Panc1 (cell line): ENCODE measurements at regions of chr1 and their contacts with region 1.

Region 1: GRCh38 chr1:15283526-15283925 is 36.5 kb downstream of the FHAD1 start:
- DNase-seq: no peak
- ATAC-seq: peak; percentile 71
- H3K4me3 ChIP-seq: no peak overlapping the region
- H3K27ac ChIP-seq: no peak overlapping the region
- H3K4me1 ChIP-seq: no peaks in the 10 kb centered on the region
- H3K27me3 ChIP-seq: no peaks in the 10 kb centered on the region; the same call in 1 of the 2 replicates
- CTCF ChIP-seq: no peak

Region 2: DNA sequence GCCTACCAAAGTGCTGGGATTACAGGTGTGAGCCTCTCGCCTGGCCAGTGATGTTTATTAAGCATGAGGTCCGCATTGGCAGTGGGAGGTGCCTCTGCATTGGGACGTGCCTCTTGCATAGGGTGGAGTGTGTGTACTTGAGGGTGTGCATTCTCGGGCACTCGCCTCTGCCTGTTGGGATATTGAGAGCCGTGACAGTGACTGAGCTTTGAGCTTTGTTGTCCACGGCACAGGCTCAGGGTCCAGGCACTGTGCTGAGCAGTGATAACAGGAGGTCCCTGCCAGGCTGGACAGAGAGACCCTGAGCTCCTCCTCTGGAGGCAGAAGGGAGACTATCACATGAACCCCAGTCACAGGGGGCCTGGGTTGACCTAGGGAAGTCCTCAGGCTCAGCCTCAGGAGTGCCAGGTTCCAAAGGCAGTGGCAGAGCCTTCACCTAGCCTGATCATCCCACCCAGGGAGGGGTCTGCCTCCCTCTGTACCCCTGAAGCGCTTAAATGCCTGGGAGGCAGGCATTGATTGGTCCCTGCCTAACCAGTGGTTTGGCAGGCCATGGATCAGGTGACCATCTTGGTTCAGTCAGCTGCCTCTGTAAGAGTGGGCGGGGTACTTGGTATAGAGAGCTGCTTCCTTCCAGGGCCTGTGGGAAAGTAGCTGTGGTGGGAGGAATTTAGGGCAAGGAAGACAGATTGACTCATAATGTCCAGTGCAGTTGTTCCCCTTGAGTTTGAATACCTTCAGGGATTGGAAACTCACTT is 343.8 kb before region 1 on chr1:
- CTCF ChIA-PET with region 1: no interaction called
- POLR2A ChIA-PET with region 1: no interaction called
- in situ Hi-C with region 1: no loop called
- intact Hi-C with region 1: no loop called
- DNase-seq: no peak
- ATAC-seq: 0 out of 2 replicates have a peak, but pooled peaks have one; percentile 17
- H3K4me3 ChIP-seq: no peak overlapping the region
- H3K27ac ChIP-seq: no peak overlapping the region
- H3K4me1 ChIP-seq: 0 out of 2 replicates have a peak, but pooled peaks cover 8% of the 10 kb centered on the region
- H3K27me3 ChIP-seq: no peaks in the 10 kb centered on the region
- CTCF ChIP-seq: no peak

Region 3: DNA sequence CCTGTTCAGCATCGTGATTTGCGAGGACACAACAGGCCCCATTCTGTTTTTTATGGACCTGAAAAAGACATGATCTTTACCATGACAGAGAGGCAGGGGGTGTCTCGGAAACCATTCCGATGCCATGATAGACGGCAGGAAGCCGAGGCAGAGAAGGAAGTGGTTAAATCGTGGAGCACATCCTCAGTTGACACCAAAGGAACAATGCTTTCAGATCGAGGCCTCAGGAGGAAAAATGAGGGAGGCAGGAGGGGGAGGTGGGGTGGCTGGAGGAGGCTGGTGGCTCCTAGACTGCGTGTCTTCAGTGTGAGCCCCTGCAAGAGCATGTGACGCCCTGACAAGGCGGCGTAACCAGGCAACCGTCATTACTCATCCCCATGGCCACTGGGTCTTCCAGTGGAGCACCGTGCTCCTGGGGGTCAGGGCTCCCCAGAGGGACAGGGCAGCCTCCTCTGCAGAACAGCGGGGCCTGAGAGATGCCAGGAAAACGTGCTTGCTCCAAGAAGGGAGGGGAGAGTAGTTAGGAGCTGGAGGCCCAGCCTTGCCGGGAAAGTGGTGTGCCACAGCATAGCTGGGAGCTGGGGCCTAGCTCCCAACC is 302.8 kb before region 1 on chr1:
- CTCF ChIA-PET with region 1: no interaction called
- POLR2A ChIA-PET with region 1: no interaction called
- in situ Hi-C with region 1: no loop called
- intact Hi-C with region 1: no loop called
- DNase-seq: no peak
- ATAC-seq: no peak
- H3K4me3 ChIP-seq: no peak overlapping the region
- H3K27ac ChIP-seq: no peak overlapping the region
- H3K4me1 ChIP-seq: peaks cover 3% of the 10 kb centered on the region; the same call in 1 of the 2 replicates
- H3K27me3 ChIP-seq: no peaks in the 10 kb centered on the region
- CTCF ChIP-seq: no peak

Region 4: GRCh38 chr1:15139654-15140350 is 143.7 kb before region 1 on chr1:
- CTCF ChIA-PET with region 1: no interaction called
- POLR2A ChIA-PET with region 1: no interaction called
- in situ Hi-C with region 1: loop called (anchors 5 kb)
- intact Hi-C with region 1: no loop called
- DNase-seq: no peak
- ATAC-seq: peak; percentile 81
- H3K4me3 ChIP-seq: no peak overlapping the region
- H3K27ac ChIP-seq: no peak overlapping the region
- H3K4me1 ChIP-seq: no peaks in the 10 kb centered on the region
- H3K27me3 ChIP-seq: no peaks in the 10 kb centered on the region
- CTCF ChIP-seq: no peak

Region 5: DNA sequence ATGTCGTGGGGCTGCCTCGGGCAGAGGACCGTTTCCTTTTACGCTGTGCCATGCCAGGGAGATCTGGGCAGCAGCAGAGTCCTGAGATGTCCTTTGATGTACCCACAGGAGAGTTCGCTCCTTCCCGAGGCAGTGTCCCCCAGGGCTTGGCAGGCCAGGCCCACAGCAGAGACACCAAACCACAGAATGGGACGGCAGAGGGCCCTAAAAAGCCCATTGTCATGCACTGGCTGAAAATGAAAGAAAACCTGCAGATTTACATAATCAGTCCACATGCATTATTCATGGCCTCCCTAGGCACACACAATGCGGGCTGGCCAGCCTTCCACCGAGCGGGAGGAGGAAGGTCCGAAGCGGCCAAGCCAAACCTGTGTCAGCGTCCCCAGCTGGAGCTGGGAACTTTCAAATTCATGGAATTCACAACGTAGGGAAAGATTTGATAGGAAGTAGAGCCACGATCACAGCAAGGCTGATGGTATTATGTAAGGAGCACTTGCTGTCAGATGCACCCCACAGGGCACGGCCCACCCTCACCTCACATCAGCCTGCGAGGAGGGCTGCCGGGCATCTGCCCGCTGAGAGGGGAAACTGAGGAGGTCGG is 100.9 kb after region 1 on chr1:
- CTCF ChIA-PET with region 1: no interaction called
- POLR2A ChIA-PET with region 1: no interaction called
- in situ Hi-C with region 1: no loop called
- intact Hi-C with region 1: no loop called
- DNase-seq: no peak
- ATAC-seq: no peak
- H3K4me3 ChIP-seq: no peak overlapping the region
- H3K27ac ChIP-seq: no peak overlapping the region
- H3K4me1 ChIP-seq: no peaks in the 10 kb centered on the region; the same call in 1 of the 2 replicates
- H3K27me3 ChIP-seq: no peaks in the 10 kb centered on the region
- CTCF ChIP-seq: no peak

Region 6: GRCh38 chr1:15409388-15410222 is 126.1 kb after region 1 on chr1 and contains the start of gene EFHD2:
- CTCF ChIA-PET with region 1: no interaction called
- POLR2A ChIA-PET with region 1: no interaction called
- in situ Hi-C with region 1: no loop called
- intact Hi-C with region 1: no loop called
- DNase-seq: no peak
- ATAC-seq: peak; percentile 94
- H3K4me3 ChIP-seq: peak within 1 kb of the TSS; percentile 75 to 87
- H3K27ac ChIP-seq: peak within 1 kb of the TSS; percentile 92
- H3K4me1 ChIP-seq: peaks cover 38% of the 10 kb centered on the region
- H3K27me3 ChIP-seq: no peaks in the 10 kb centered on the region
- CTCF ChIP-seq: no peak
- total RNA-seq, gene EFHD2: 90.8 TPM

Region 7: DNA sequence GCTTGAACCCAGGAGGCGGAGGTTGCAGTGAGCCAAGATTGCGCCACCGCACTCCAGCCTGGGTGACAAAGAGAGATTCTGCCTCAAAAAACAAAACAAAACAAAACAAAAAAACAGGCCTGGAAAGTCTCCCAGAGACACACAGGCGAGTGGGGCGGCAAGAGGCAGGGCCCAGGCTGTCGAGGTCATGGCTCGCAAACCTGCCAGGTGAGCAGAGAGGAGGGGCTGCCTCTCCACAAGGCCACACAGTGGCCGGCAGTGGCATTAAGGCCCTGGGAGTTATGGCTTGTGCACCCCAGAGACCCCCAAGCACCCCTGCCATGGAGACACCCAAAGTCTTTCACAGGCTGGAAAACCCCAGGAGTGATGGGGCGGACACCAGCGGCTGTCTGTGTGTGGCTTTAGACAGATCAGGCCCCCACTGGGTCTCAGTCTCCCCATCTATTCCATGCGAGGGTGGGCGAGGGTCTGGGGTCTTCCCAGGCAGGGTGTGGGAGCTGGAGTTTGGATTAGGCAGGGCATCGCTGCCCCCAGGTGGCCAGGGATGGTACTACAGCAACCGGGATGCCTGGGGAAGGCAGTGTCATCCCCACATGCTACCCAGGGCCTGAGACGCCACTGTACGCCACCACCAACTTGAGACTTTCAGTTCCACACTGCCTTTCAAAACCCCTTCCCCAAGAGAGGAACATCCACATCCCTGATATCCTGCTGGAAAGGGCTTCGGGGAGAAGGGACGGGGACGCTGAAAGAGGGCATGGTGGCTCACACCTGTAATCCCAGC is 147.5 kb after region 1 on chr1:
- CTCF ChIA-PET with region 1: interaction called, 12 read pairs
- POLR2A ChIA-PET with region 1: no interaction called
- in situ Hi-C with region 1: no loop called
- intact Hi-C with region 1: no loop called
- DNase-seq: peak; percentile 80
- ATAC-seq: peak; percentile 61
- H3K4me3 ChIP-seq: no peak overlapping the region
- H3K27ac ChIP-seq: no peak overlapping the region
- H3K4me1 ChIP-seq: peaks cover 21% of the 10 kb centered on the region
- H3K27me3 ChIP-seq: no peaks in the 10 kb centered on the region
- CTCF ChIP-seq: peak; percentile 96